HEK293T (cell line): ENCODE measurements at regions of chr16 and their contacts with region 1.

Region 1: DNA sequence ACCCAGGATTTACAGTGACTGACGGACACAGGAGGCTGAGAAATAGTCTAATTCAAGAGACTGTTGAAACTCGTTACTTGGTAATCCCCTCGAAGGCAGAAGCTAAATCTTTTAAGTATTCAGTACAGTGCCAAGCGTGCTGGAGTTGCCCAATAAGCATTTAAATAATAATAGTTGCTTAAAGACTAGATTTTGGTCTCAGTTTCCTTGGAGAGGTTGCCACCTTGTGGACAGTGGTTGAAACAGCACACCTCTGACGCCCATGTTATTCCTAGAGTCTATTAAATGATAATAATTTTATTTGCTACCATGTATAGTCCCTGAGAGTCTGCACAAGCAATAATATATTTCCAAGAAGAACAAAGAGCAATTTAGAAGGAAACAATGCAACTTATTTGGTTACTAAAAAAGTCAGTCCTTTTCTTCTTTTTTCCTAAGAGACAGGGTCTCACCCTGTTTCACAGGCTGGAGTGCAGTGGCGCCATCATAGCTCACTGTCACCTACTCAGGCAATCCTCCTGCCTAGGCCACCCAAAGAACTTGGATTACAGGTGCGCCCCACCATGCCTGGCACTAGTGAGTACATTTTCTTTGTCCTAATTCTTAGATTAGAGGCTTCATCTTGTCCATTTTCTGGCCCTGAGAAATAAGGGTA is 138.0 kb upstream of the NUDT7 start:
- DNase-seq: peak; percentile 57

Region 2: GRCh38 chr16:77236063-77236511 is 348.2 kb before region 1 on chr16:
- CTCF ChIA-PET with region 1: interaction called, 67 read pairs
- POLR2A ChIA-PET with region 1: no interaction called
- DNase-seq: peak; percentile 86

Region 3: DNA sequence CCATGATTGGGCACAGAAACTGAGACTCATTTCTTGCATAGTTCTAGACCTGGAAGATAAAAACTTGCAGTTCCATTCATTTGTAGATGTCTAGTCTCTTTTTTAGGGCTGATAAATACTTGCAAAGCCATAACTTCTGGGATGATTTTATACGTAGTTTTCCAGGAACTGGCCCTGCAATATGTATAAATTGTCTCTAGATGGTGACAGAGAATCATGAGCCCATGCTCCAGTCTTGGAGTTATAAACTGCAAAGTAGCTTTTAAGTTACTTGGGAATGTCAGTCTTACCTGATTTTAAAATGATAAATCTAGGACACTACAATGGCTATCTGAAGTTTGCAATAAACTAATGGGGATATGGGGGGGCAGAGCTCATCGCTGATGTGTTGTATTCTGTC is 146.5 kb before region 1 on chr16:
- CTCF ChIA-PET with region 1: interaction called, 20 read pairs
- POLR2A ChIA-PET with region 1: interaction called, 7 read pairs
- DNase-seq: no peak